PC-3 (cell line): ENCODE measurements at regions of chr11 and their contacts with region 1.

Region 1: DNA sequence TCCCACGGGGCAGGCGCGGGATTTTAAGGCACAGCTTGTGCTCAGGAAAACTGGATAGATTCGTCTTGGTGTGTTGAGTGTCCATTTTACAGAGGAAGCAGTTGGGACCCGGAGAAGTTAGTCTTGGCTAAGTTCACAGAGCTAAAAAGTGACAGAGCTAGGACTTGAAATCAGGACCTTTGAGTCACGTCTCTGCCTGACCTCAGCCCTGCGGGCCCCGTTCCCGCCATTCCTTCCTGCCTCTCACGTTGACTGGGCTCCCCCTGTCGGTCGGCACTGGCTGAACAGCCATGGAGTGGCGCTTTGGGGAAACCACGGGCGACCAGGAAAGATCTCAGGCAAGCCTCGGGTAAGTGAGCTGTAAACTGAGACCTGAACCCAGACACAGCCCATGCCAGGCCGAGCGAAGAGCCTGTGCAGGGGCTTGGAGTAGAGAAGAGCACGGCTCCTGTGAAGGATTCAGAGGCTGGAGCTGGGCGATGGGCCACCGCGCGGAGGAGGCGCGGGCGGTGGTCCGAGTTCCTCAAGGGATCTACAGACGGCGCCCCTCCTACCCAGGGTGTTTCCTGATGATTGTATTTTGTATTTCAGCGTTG is 54.1 kb downstream of the WNT11 start:
- DNase-seq: peak; percentile 94
- ATAC-seq: peak; percentile 55
- H3K4me3 ChIP-seq: no peak overlapping the region
- H3K27ac ChIP-seq: no peak overlapping the region
- H3K4me1 ChIP-seq: peaks cover 37% of the 10 kb centered on the region
- H3K27me3 ChIP-seq: no peaks in the 10 kb centered on the region
- CTCF ChIP-seq: peak; percentile 98

Region 2: DNA sequence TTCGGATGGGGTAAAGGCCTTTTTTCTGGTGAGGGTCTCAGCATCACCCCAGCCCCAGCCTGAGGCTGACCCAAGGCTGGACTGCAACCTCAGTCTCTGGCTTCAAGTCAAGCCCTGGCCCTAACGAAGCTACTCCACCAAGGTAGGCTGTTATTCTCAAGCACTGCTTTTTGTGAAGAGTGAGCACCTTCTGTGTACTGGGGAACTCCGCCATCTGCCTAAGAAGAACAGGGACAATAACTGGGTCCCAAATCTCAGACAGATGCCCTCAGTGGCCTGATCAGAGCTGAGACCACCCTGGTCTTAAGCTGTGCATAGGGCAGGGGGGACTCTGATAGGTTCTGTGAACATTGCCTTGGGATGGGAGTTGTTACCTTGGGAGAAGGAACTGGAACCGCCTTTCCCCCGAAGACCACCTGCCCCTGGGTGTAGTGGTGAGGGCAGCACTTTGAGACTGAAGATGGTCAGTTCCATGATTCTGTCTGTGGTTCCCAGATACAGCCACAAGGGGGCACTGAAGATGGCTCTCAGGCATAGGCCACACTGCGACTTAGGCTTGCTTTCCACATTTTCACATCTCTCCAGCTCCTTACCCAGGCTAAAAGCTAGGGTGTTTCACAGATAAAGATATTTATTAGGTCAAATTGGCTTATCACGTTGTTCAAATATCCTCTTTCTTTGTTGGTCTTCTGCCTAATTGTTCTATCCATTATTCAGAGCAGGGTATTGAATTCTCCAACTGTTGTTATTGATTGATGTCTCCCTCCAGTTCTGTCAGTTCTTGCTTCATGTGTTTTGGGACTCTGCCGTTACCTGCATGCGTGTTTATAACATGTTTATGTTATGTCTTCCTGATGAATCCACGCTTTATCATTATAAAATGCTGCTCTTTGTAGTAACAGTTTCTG is 349.0 kb before region 1 on chr11:
- CTCF ChIA-PET with region 1: interaction called, 3 read pairs
- POLR2A ChIA-PET with region 1: no interaction called
- intact Hi-C with region 1: loop called (anchors 5 kb)
- DNase-seq: peak; percentile 84
- ATAC-seq: peak; percentile 96
- H3K4me3 ChIP-seq: no peak overlapping the region
- H3K27ac ChIP-seq: no peak overlapping the region
- H3K4me1 ChIP-seq: peaks cover 9% of the 10 kb centered on the region; the same call in 1 of the 2 replicates
- H3K27me3 ChIP-seq: no peaks in the 10 kb centered on the region
- CTCF ChIP-seq: peak; percentile 97

Region 3: DNA sequence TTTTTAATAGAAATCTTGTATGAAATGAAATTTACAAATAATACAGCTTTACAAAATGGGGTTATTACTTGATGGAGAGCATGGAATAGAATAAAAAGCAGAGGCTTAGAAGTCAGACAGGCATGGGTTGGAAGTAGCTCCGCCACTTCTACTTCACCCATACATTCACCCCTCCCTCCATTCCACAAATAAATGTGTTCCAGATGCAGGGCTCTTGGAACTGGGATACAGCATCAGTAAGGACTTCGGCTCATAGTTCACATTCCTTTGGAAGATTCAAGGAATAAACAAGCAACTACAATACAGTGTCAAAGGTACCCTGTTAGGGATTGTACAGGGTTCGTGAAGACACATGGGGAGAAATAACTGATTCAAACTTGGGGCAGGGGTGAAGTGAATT is 102.7 kb before region 1 on chr11:
- CTCF ChIA-PET with region 1: no interaction called
- POLR2A ChIA-PET with region 1: no interaction called
- intact Hi-C with region 1: no loop called
- DNase-seq: no peak
- ATAC-seq: no peak
- H3K4me3 ChIP-seq: no peak overlapping the region
- H3K27ac ChIP-seq: no peak overlapping the region
- H3K4me1 ChIP-seq: peaks cover 22% of the 10 kb centered on the region
- H3K27me3 ChIP-seq: no peaks in the 10 kb centered on the region
- CTCF ChIP-seq: no peak

Region 4: DNA sequence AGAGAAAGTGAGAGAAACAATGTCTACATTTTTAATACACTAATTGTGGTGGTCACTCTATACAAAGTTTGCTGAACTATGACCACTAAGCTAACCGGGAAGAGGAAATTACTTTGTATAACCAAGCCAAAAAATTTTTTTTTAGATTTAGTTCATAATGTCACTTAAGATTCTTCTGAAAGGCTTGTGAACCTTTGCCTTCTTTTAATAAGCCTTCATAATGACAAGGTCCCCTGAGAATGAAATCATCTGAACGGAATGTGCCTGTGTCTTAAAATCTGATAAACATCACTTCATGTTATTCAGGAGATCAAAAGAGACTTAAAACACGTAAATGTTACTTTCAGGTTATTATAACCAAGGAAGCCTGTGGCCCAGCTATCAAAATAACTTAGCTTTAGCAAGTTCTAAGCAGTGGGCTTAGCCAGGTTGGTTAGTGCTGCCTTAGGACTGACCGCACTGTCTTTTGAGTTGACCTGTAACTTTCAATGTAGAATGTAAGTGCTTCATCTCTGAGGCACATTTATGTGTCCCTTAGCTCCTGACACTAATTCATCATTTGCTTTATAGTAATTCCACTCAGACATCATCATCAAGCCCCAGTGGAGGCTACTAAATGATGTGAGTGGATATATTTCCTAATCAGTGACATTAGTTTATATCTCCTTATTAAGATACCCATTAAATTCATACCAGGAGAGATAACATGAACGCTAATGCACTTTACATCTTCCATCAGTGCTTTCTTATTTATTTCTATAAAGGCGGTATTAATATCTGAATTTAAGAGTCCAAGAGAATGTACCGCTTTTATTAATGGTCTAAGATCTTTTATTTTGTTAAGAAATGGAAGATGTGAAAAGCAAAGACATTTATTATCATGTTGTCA is 68.4 kb before region 1 on chr11:
- CTCF ChIA-PET with region 1: no interaction called
- POLR2A ChIA-PET with region 1: no interaction called
- intact Hi-C with region 1: loop called (anchors 10 kb)
- DNase-seq: peak; percentile 67
- ATAC-seq: peak; percentile 58
- H3K4me3 ChIP-seq: no peak overlapping the region; the same call in 1 of the 2 replicates
- H3K27ac ChIP-seq: peak overlapping the region; percentile 14
- H3K4me1 ChIP-seq: peaks cover 14% of the 10 kb centered on the region
- H3K27me3 ChIP-seq: no peaks in the 10 kb centered on the region
- CTCF ChIP-seq: no peak